CD4-positive, alpha-beta memory T cell (primary cell): ENCODE measurements at regions of chr4 and their contacts with region 1.

Region 1: DNA sequence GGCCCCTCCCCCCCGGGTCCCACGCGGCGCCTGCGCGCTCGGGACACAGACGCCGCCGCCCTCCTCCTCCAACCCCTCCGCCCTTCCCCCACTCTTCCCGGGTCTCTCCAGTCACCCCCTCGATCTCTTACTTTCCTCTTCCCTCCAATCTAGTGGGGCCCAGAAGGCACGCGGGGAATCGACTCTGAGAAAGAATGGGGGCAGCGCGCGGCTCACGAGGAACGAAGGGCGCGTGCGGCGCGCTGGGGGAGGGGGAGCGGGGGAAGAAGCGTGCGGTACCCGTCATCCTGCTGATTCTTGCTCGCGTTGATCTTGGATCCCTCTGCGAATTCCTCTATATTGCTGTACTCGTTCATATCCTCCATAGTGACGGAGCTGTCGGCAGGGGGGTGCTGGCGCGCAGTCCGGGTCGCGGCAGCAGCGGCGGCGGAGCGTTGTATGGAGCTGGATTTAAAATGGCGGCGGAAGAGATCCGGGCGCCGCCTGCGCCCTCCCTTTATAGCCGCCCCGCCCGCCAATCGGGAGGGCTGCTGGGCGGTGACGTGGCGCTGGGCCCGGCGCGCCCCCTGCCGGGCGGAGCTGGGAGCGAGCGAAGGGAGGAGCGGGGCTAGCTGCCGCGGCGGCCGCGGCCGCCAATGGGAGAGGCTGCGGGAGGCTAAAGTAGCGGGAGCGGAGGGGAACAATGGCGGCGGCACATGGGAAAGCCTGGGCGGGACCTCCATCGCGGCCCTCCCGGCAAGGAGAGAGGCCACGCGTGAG is 1.1 kb downstream of the HNRNPDL start:
- DNase-seq: peak; percentile 90 to 96 (median 93)
- H3K4me3 ChIP-seq: peak overlapping the region; percentile 66 to 73
- H3K4me3 Mint-ChIP-seq: peak overlapping the region; percentile 98 to 100 (median 100)
- H3K27ac ChIP-seq: peak overlapping the region; percentile 99
- H3K27ac Mint-ChIP-seq: peak overlapping the region; percentile 97 to 100 (median 100)
- H3K4me1 ChIP-seq: peaks cover 64% of the 10 kb centered on the region
- H3K4me1 Mint-ChIP-seq: peaks cover 41 to 83% (median 59%) of the 10 kb centered on the region in 4 donors
- H3K27me3 ChIP-seq: no peaks in the 10 kb centered on the region
- H3K27me3 Mint-ChIP-seq: no peaks in the 10 kb centered on the region

Region 2: GRCh38 chr4:82284858-82285805 is 144.0 kb before region 1 on chr4:
- CTCF ChIA-PET with region 1: interaction called, 21 read pairs
- POLR2A ChIA-PET with region 1: interaction called, 12 read pairs
- intact Hi-C with region 1: loop called (anchors 1 kb)
- DNase-seq: peak; percentile 99
- H3K4me3 ChIP-seq: peak overlapping the region; percentile 25 to 70
- H3K4me3 Mint-ChIP-seq: peak overlapping the region; percentile 81 to 94 (median 86)
- H3K27ac ChIP-seq: peak overlapping the region; percentile 49
- H3K27ac Mint-ChIP-seq: peak overlapping the region; percentile 62 to 91 (median 88)
- H3K4me1 ChIP-seq: peaks cover 12% of the 10 kb centered on the region
- H3K4me1 Mint-ChIP-seq: peaks cover 8 to 19% (median 14%) of the 10 kb centered on the region in 4 donors
- H3K27me3 ChIP-seq: no peaks in the 10 kb centered on the region
- H3K27me3 Mint-ChIP-seq: no peaks in the 10 kb centered on the region

Region 3: DNA sequence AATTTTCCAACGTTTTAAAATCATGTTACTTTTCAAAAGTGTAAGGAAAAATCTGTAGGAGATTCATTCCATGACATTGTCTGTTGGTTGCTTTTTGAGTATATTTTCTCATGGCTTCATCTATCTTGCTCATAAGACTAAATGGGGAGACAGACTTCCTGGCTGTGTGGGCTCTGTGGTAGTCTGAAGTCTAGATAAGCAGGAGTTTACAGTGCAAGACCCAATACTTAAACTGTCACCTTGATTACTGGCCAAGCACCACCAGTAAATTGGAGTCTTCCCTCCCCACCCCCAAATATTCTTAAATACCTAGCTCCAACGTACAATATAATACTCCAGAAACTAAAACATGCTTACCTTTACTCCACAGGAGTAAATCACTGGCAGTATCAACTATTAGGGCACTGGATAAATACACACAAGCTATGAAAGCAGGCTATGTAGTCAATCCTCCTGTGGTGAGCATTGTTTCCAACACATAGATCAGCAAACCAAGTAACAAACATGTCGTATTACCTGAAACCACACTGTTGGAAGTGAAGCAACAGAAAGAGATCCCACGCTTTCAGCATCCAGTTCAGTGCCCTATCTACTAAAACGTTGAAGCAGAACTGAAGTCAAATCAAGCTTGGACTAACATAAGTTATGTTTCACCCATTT is 61.6 kb before region 1 on chr4:
- CTCF ChIA-PET with region 1: interaction called, 27 read pairs
- POLR2A ChIA-PET with region 1: interaction called, 49 read pairs
- intact Hi-C with region 1: no loop called
- DNase-seq: no peak
- H3K4me3 ChIP-seq: no peak overlapping the region
- H3K4me3 Mint-ChIP-seq: peak overlapping the region in 7 of 8 donors; percentile 13 to 89 (median 40)
- H3K27ac ChIP-seq: peak overlapping the region; percentile 27
- H3K27ac Mint-ChIP-seq: peak overlapping the region in 6 of 7 donors; percentile 29 to 99 (median 47)
- H3K4me1 ChIP-seq: peaks cover 96% of the 10 kb centered on the region
- H3K4me1 Mint-ChIP-seq: peaks cover 58 to 94% (median 78%) of the 10 kb centered on the region in 4 donors
- H3K27me3 ChIP-seq: no peaks in the 10 kb centered on the region
- H3K27me3 Mint-ChIP-seq: no peaks in the 10 kb centered on the region

Region 4: GRCh38 chr4:82462415-82462831 is 33.3 kb after region 1 on chr4:
- CTCF ChIA-PET with region 1: interaction called, 3 read pairs
- POLR2A ChIA-PET with region 1: interaction called, 3 read pairs
- intact Hi-C with region 1: loop called (anchors 1 kb)
- DNase-seq: peak; percentile 74 to 83 (median 77)
- H3K4me3 ChIP-seq: no peak overlapping the region
- H3K4me3 Mint-ChIP-seq: no peak overlapping the region
- H3K27ac ChIP-seq: no peak overlapping the region
- H3K27ac Mint-ChIP-seq: peak overlapping the region in 5 of 7 donors; percentile 29 to 55 (median 45)
- H3K4me1 ChIP-seq: no peaks in the 10 kb centered on the region
- H3K4me1 Mint-ChIP-seq: peaks cover 0 to 5% (median 2%) of the 10 kb centered on the region in 4 donors
- H3K27me3 ChIP-seq: no peaks in the 10 kb centered on the region
- H3K27me3 Mint-ChIP-seq: no peaks in the 10 kb centered on the region

Region 5: GRCh38 chr4:82758701-82759685 is 329.8 kb after region 1 on chr4:
- CTCF ChIA-PET with region 1: no interaction called
- POLR2A ChIA-PET with region 1: no interaction called
- intact Hi-C with region 1: no loop called
- DNase-seq: no peak
- H3K4me3 ChIP-seq: no peak overlapping the region
- H3K4me3 Mint-ChIP-seq: no peak overlapping the region
- H3K27ac ChIP-seq: no peak overlapping the region
- H3K27ac Mint-ChIP-seq: peak overlapping the region in 1 of 7 donors; percentile 53
- H3K4me1 ChIP-seq: no peaks in the 10 kb centered on the region
- H3K4me1 Mint-ChIP-seq: no peaks in the 10 kb centered on the region
- H3K27me3 ChIP-seq: no peaks in the 10 kb centered on the region
- H3K27me3 Mint-ChIP-seq: peaks cover 4 to 14% of the 10 kb centered on the region in 2 donors

Region 6: GRCh38 chr4:82900331-82901128 is 471.4 kb after region 1 on chr4 and contains the start of gene THAP9:
- CTCF ChIA-PET with region 1: no interaction called
- POLR2A ChIA-PET with region 1: interaction called, 18 read pairs
- intact Hi-C with region 1: no loop called
- DNase-seq: peak; percentile 98 to 100 (median 99)
- H3K4me3 ChIP-seq: peak within 1 kb of the TSS; percentile 92 to 99
- H3K4me3 Mint-ChIP-seq: no peak within 1 kb of the TSS
- H3K27ac ChIP-seq: peak within 1 kb of the TSS; percentile 98
- H3K27ac Mint-ChIP-seq: no peak within 1 kb of the TSS
- H3K4me1 ChIP-seq: peaks cover 47% of the 10 kb centered on the region
- H3K4me1 Mint-ChIP-seq: peaks cover 10 to 20% (median 16%) of the 10 kb centered on the region in 4 donors
- H3K27me3 ChIP-seq: no peaks in the 10 kb centered on the region
- H3K27me3 Mint-ChIP-seq: no peaks in the 10 kb centered on the region
- total RNA-seq, gene THAP9: 2.7 to 3.7 TPM

Region 7: GRCh38 chr4:83034630-83035494 is 605.7 kb after region 1 on chr4 and contains the start of gene COPS4:
- CTCF ChIA-PET with region 1: no interaction called
- POLR2A ChIA-PET with region 1: interaction called, 12 read pairs
- intact Hi-C with region 1: no loop called
- DNase-seq: peak; percentile 93 to 99 (median 98)
- H3K4me3 ChIP-seq: peak within 1 kb of the TSS; percentile 76 to 84
- H3K4me3 Mint-ChIP-seq: peak within 1 kb of the TSS; percentile 98 to 100 (median 100)
- H3K27ac ChIP-seq: peak within 1 kb of the TSS; percentile 85
- H3K27ac Mint-ChIP-seq: peak within 1 kb of the TSS; percentile 94 to 100 (median 99)
- H3K4me1 ChIP-seq: peaks cover 25% of the 10 kb centered on the region
- H3K4me1 Mint-ChIP-seq: peaks cover 15 to 41% (median 25%) of the 10 kb centered on the region in 4 donors
- H3K27me3 ChIP-seq: no peaks in the 10 kb centered on the region
- H3K27me3 Mint-ChIP-seq: no peaks in the 10 kb centered on the region
- total RNA-seq, gene COPS4: 24.6 to 26.1 TPM